ENCODE measurements at regions of chr1 and their contacts with region 1.

Region 1: GRCh38 chr1:16078925-16079656 is 5.6 kb upstream of the FAM131C start:
- DNase-seq: peak; percentile 55
- H3K4me3 ChIP-seq: no peak overlapping the region
- H3K27ac ChIP-seq: no peak overlapping the region
- H3K4me1 ChIP-seq: peaks cover 29% of the 10 kb centered on the region
- H3K27me3 ChIP-seq: no peaks in the 10 kb centered on the region
- CTCF ChIP-seq: peak; percentile 93 to 96

Region 2: DNA sequence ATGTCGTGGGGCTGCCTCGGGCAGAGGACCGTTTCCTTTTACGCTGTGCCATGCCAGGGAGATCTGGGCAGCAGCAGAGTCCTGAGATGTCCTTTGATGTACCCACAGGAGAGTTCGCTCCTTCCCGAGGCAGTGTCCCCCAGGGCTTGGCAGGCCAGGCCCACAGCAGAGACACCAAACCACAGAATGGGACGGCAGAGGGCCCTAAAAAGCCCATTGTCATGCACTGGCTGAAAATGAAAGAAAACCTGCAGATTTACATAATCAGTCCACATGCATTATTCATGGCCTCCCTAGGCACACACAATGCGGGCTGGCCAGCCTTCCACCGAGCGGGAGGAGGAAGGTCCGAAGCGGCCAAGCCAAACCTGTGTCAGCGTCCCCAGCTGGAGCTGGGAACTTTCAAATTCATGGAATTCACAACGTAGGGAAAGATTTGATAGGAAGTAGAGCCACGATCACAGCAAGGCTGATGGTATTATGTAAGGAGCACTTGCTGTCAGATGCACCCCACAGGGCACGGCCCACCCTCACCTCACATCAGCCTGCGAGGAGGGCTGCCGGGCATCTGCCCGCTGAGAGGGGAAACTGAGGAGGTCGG is 694.7 kb before region 1 on chr1:
- CTCF ChIA-PET with region 1: no interaction called
- dilution Hi-C with region 1: no loop called
- in situ Hi-C with region 1: no loop called
- intact Hi-C with region 1: no loop called
- DNase-seq: no peak
- H3K4me3 ChIP-seq: no peak overlapping the region
- H3K27ac ChIP-seq: no peak overlapping the region
- H3K4me1 ChIP-seq: peaks cover 14% of the 10 kb centered on the region
- H3K27me3 ChIP-seq: no peaks in the 10 kb centered on the region
- CTCF ChIP-seq: no peak

Region 3: GRCh38 chr1:16009030-16009709 is 69.9 kb before region 1 on chr1:
- CTCF ChIA-PET with region 1: no interaction called
- dilution Hi-C with region 1: no loop called
- in situ Hi-C with region 1: no loop called
- intact Hi-C with region 1: loop called (anchors 1 kb)
- DNase-seq: peak; percentile 37
- H3K4me3 ChIP-seq: no peak overlapping the region
- H3K27ac ChIP-seq: no peak overlapping the region
- H3K4me1 ChIP-seq: peaks cover 19% of the 10 kb centered on the region
- H3K27me3 ChIP-seq: no peaks in the 10 kb centered on the region
- CTCF ChIP-seq: peak; percentile 92 to 97

Region 4: GRCh38 chr1:16032388-16033103 is 46.5 kb before region 1 on chr1:
- CTCF ChIA-PET with region 1: no interaction called
- dilution Hi-C with region 1: no loop called
- in situ Hi-C with region 1: no loop called
- intact Hi-C with region 1: no loop called
- DNase-seq: peak; percentile 58
- H3K4me3 ChIP-seq: no peak overlapping the region
- H3K27ac ChIP-seq: no peak overlapping the region
- H3K4me1 ChIP-seq: peaks cover 6% of the 10 kb centered on the region
- H3K27me3 ChIP-seq: no peaks in the 10 kb centered on the region
- CTCF ChIP-seq: peak; percentile 86 to 97

Region 5: GRCh38 chr1:16155532-16156410 is 76.7 kb after region 1 on chr1 and contains the start of gene EPHA2:
- CTCF ChIA-PET with region 1: interaction called, 10 read pairs
- dilution Hi-C with region 1: no loop called
- in situ Hi-C with region 1: no loop called
- intact Hi-C with region 1: loop called (anchors 2 kb)
- DNase-seq: peak; percentile 91
- H3K4me3 ChIP-seq: peak within 1 kb of the TSS; percentile 87 to 97 (median 89)
- H3K27ac ChIP-seq: peak within 1 kb of the TSS; percentile 84
- H3K4me1 ChIP-seq: peaks cover 54% of the 10 kb centered on the region
- H3K27me3 ChIP-seq: no peaks in the 10 kb centered on the region
- CTCF ChIP-seq: no peak
- total RNA-seq, gene EPHA2: 77.3 to 181 TPM

Region 6: DNA sequence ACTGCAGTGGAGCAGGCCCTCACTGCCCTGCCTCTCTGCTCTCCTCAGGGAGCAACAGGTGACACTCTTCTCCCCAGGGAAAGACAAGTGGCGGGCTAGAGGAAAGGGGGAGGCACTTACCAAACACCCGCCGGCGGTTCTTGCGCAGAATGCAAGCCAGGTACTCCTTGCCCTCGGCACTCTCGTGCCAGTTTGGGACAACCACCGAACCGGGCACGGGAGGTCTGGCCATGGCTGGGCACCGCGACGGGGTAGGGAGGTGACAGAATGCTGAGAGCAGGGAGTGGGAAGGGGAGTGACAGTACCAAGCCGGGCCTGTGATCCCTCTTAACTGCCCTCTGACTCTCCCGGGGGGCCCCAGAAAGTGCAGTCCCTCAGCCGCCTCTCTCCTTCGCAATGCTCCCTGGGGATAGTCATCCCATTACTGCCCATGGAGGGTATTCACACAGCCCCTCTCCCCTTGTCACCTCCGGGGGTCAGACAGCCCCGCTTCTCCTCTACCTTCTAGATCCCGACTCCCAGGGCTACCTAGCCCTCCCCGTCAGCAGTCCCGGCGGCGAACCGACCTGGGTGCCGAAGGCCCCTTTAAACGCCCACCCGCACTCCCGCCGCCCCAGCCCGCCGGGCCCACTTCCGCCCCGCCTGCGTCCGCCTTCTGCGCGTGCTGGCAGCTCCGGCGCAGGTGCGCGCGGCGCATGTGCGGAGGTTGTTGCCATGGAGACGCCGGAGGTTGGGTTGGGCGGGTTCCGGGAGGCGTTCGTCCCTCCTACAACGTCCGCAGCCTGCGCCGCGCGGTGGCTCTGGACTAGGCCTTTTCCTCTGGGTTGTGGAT is 157.6 kb after region 1 on chr1 and contains the start of gene CPLANE2:
- CTCF ChIA-PET with region 1: no interaction called
- dilution Hi-C with region 1: no loop called
- in situ Hi-C with region 1: loop called (anchors 5 kb)
- intact Hi-C with region 1: loop called (anchors 2 kb)
- DNase-seq: peak; percentile 87
- H3K4me3 ChIP-seq: peak within 1 kb of the TSS; percentile 57 to 71 (median 62)
- H3K27ac ChIP-seq: peak within 1 kb of the TSS; percentile 64
- H3K4me1 ChIP-seq: peaks cover 23% of the 10 kb centered on the region
- H3K27me3 ChIP-seq: no peaks in the 10 kb centered on the region
- CTCF ChIP-seq: no peak
- total RNA-seq, gene CPLANE2: 13.3 to 14.8 TPM

Region 7: DNA sequence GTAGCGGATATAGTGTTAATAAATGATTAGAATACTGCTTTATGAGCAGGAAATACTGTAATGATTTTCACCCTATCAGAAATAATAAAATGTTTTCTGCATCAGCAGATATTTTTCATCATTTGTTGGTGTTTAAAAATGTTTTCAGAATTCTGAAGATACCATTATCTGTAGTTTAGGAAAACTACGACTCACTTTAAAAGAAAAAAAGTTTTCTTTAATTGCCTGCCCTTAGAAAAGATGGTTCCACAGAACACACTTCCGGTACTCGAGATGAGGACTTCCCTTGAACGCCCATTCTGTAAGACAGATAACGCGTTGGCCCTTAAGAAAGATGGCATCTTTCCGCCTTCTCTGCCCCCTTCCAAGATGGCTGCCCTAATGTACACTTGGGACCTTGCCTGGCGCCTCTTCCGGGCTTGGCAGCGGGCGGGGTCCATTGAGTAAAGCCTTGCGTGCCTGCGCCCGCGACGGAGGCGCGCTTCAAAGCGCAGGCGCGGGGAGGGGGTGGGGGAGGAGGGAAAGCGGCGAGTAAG is 287.7 kb after region 1 on chr1 and contains the start of gene SZRD1:
- CTCF ChIA-PET with region 1: interaction called, 3 read pairs
- dilution Hi-C with region 1: no loop called
- in situ Hi-C with region 1: loop called (anchors 10 to 25 kb)
- intact Hi-C with region 1: loop called (anchors 1 kb)
- DNase-seq: peak; percentile 99
- H3K4me3 ChIP-seq: peak within 1 kb of the TSS; percentile 63 to 73 (median 70)
- H3K27ac ChIP-seq: peak within 1 kb of the TSS; percentile 85
- H3K4me1 ChIP-seq: peaks cover 16% of the 10 kb centered on the region
- H3K27me3 ChIP-seq: no peaks in the 10 kb centered on the region
- CTCF ChIP-seq: no peak
- total RNA-seq, gene SZRD1: 46.0 to 126 TPM

Region 8: DNA sequence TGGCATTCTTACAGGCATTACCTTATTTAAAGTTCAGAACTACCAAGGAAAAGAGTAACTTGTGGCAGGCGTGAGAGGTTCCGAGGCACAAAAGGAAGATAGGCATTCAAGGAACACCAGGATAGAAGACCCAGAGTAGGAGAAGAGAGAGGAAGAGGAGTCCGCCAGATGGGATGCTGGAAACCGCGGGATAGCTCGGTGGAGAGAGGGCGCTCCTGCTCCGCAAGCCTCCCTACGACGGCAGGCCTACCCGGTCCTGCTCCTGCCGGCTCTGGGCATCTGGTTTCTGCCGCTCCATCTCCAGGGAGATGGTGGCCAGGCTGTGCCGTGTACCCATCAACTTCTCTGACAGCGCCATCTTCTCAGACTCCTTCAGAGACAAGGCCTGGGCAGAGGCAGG is 539.6 kb after region 1 on chr1:
- CTCF ChIA-PET with region 1: no interaction called
- dilution Hi-C with region 1: no loop called
- in situ Hi-C with region 1: no loop called
- intact Hi-C with region 1: loop called (anchors 5 kb)
- DNase-seq: no peak
- H3K4me3 ChIP-seq: no peak overlapping the region
- H3K27ac ChIP-seq: no peak overlapping the region
- H3K4me1 ChIP-seq: peaks cover 26% of the 10 kb centered on the region
- H3K27me3 ChIP-seq: no peaks in the 10 kb centered on the region
- CTCF ChIP-seq: no peak